A549 (cell line): ENCODE measurements at regions of chr7 and their contacts with region 1.

Region 1: DNA sequence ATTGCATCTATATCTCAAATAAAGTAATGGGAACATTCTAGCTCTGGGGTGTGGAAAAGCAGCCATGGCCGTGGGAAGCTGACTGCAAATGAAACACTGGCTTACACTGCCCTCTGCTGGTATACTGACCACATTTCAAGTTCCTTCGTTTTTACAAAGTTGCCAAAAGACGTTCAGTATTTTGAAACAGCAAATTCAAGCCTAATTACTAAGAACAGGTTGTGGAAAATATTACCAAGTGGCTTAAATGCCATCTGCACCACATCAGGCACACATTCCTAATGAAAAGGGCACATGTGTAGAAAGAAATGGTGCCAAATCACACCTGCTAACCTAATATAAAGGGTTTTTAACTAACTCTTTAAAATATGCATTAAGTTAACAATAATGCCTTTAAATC is 83.9 kb downstream of the JAZF1 start:
- DNase-seq: peak; percentile 63 to 72
- ATAC-seq: peak; percentile 65 to 68; a peak in 3 of 6 replicates
- H3K4me3 ChIP-seq: no peak overlapping the region
- H3K27ac ChIP-seq: no peak overlapping the region
- H3K4me1 ChIP-seq: 0 out of 3 replicates have a peak, but pooled peaks cover 3% of the 10 kb centered on the region
- CTCF ChIP-seq: peak; percentile 92
- EP300 ChIP-seq: no peak
- POLR2A ChIP-seq: no peak
- RAD21 ChIP-seq: peak; percentile 88 to 94

Region 2: DNA sequence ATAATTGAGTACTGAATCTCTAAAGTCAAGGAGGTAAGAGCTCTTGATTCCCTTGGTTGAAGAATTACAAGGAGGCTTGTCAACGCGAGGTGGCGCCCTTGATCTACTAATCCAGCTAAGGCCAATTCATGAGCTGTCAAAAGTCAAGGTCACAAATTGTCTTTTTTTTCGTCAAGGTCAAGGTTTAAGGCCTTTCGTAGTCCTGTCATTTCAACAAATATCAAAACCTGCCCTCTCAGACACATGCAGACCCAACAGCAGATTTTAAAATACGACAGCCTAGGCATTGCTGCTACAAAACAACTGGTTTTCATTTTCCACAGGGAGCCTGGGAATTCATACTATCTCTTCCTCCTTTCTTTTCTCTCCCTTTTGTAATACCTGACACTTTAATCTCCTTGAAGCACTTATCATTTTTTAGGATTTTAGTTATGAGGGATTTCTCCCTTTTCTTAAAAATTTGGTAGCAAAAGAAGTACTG is 900.4 kb before region 1 on chr7:
- CTCF ChIA-PET with region 1: interaction called, 58 read pairs
- POLR2A ChIA-PET with region 1: interaction called, 3 read pairs
- DNase-seq: peak; percentile 58 to 79
- ATAC-seq: no peak
- H3K4me3 ChIP-seq: no peak overlapping the region
- H3K27ac ChIP-seq: no peak overlapping the region
- H3K4me1 ChIP-seq: peaks cover 15% of the 10 kb centered on the region
- CTCF ChIP-seq: peak; percentile 96
- EP300 ChIP-seq: no peak
- POLR2A ChIP-seq: no peak
- RAD21 ChIP-seq: peak; percentile 97 to 98

Region 3: GRCh38 chr7:27535795-27536194 is 560.9 kb before region 1 on chr7:
- CTCF ChIA-PET with region 1: no interaction called
- POLR2A ChIA-PET with region 1: no interaction called
- DNase-seq: no peak
- ATAC-seq: no peak
- H3K4me3 ChIP-seq: no peak overlapping the region
- H3K27ac ChIP-seq: no peak overlapping the region
- H3K4me1 ChIP-seq: no peaks in the 10 kb centered on the region
- CTCF ChIP-seq: no peak
- EP300 ChIP-seq: no peak
- POLR2A ChIP-seq: no peak
- RAD21 ChIP-seq: no peak

Region 4: DNA sequence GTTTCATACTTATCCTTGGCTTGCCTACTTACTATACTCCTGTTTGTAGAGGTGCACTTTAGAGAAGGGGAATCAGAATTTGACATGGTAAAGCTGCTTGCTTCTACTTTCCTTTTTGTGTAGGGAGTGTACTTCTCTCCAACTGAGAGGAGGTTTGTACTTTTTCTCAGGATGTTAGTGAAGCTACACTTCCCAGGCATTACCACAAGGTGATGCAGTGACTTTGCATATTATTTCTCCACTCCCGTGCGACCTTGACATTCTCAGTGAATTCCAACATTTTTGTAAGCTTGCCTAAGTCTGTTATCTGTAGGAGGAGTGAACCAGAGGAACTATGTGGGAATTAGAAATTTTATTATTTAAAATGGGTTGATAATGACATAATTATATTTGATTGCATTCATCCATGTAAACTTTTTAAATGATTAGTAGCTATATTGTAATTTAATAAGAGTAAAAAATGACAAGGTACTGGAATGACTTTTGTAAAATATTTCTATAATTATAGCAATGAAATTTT is 351.6 kb before region 1 on chr7:
- CTCF ChIA-PET with region 1: interaction called, 10 read pairs
- POLR2A ChIA-PET with region 1: no interaction called
- DNase-seq: peak; percentile 67 to 90
- ATAC-seq: peak; percentile 81 to 86
- H3K4me3 ChIP-seq: no peak overlapping the region; the same call in 2 of the 3 replicates
- H3K27ac ChIP-seq: peak overlapping the region; percentile 61 to 72
- H3K4me1 ChIP-seq: peaks cover 58% of the 10 kb centered on the region
- CTCF ChIP-seq: peak; percentile 88
- EP300 ChIP-seq: no peak
- POLR2A ChIP-seq: no peak
- RAD21 ChIP-seq: peak; percentile 85 to 89

Region 5: DNA sequence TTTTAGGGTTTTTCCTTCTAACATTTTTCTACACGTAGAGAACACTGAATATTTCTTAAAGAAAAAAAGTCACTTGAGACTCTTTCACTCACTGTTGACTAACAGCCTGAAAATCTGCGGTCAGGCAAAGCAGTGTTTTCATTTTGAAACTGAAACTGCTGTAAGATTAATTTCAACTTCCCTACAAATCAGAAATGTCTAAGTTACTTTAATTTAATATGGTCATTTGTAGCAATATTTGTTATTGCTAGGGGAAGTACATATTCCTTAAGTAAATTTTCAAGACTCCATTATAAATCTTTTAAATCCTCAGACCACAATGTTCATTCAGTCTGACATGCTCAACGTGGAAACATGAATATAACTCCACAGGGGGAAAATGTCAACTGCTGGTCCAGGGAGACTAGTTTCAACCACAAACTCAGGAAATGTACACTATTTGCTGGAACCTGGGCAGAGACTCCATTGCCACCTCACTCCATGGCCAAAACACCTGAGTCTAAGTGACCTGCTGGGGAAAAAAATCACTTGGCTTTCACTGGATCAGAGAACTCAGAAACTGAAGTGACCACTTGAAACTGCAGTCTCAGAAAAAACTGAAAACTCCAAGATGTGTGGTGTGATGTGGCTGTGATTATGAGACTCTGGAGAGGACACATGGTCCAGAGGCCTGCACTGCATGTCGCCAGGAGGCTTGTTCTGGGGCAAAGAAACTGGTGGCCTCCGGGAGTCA is 195.5 kb before region 1 on chr7:
- CTCF ChIA-PET with region 1: no interaction called
- POLR2A ChIA-PET with region 1: no interaction called
- DNase-seq: no peak
- ATAC-seq: peak in 1 of 2 experiments; percentile 49; a peak in 2 of 6 replicates
- H3K4me3 ChIP-seq: no peak overlapping the region
- H3K27ac ChIP-seq: 0 out of 6 replicates have a peak overlapping the region, but pooled peaks of 1 of the 2 experiments have one; percentile 17
- H3K4me1 ChIP-seq: no peaks in the 10 kb centered on the region
- CTCF ChIP-seq: no peak
- EP300 ChIP-seq: no peak
- POLR2A ChIP-seq: no peak
- RAD21 ChIP-seq: no peak

Region 6: DNA sequence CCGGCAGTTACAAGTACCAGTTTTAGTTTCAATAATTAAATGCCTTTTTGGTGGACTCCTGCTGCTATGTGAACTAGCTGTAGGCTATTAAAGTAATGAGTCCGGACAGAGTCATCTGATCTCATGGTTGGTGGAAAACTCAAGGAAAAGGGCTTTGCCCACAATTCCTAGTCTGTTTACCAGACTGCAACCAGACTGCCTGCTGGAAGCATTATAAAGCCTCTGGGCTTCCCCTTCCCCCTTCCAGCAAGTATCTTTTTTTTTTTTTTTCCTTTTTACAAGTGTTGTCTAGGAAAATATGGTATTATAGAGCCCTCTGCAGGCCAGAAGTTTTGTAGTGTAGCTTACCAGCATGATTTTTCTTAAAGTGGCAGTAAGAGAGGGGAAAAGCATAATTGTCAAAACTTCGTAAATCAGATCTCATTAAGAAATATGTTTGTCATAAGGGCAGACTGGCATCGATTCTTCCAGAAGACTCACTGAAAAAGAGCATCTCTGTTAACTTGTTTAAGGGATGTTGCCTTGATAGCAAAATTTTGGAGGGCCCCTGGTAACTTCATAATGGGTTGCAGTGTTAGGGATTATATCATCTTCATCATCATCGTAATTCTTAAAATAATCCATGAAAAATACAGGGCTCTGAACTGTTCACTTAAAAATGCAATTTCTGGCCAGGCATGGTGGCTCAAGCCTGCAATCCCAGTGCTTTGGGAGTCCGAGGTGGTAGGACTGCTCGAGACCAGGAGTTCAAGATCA is 175.5 kb before region 1 on chr7:
- CTCF ChIA-PET with region 1: interaction called, 14 read pairs
- POLR2A ChIA-PET with region 1: no interaction called
- DNase-seq: peak; percentile 49 to 82
- ATAC-seq: peak; percentile 79 to 90
- H3K4me3 ChIP-seq: 0 out of 3 replicates have a peak overlapping the region, but pooled peaks have one; percentile 1
- H3K27ac ChIP-seq: peak overlapping the region; percentile 43 to 71; a peak in 5 of 6 replicates
- H3K4me1 ChIP-seq: peaks cover 37% of the 10 kb centered on the region
- CTCF ChIP-seq: peak; percentile 84
- EP300 ChIP-seq: no peak
- POLR2A ChIP-seq: no peak
- RAD21 ChIP-seq: peak; percentile 88 to 94

Region 7: DNA sequence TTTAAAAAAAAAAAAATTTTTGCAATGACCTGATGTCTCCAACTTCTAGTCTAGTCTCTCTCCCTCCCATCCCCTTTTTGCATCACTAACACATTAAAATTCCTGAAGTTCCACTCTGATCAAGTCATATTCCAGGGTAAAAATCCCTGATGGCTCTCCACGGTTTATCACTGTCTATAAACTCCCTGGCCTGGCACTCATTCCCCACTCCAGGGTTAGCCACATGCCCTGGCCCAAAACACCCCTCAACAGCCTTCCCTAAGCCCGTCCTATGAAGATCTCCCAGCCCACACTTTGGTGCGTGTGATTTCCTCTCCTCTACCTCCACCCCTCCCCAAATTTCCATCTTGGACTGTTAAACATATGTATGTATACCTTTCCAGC is 41.6 kb before region 1 on chr7:
- CTCF ChIA-PET with region 1: interaction called, 18 read pairs
- POLR2A ChIA-PET with region 1: no interaction called
- DNase-seq: peak in 1 of 2 experiments; percentile 77
- ATAC-seq: peak; percentile 82 to 91
- H3K4me3 ChIP-seq: no peak overlapping the region; the same call in 2 of the 3 replicates
- H3K27ac ChIP-seq: peak overlapping the region; percentile 87 to 92
- H3K4me1 ChIP-seq: peaks cover 58% of the 10 kb centered on the region
- CTCF ChIP-seq: no peak
- EP300 ChIP-seq: no peak; a peak in 1 of 5 replicates
- POLR2A ChIP-seq: no peak
- RAD21 ChIP-seq: no peak

Region 8: DNA sequence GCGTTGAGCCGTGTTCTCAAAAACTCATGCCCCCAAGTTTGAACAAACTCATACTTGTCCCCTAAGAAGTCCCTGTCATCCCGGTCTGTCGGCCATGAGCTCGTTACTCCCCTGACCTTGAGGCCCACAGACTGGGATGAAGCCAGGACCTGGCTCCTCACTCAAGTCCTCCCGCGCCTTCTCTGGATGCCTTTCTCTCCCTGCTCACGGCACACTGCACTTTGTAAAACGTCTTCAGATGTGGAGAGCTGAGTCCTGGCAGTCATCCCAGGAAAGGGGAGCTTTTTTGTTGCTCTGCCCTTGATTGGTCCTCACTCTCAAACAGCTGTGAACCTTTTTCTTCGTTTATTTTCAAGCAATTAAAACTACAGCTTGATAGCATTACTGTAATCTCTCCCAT is 26.9 kb before region 1 on chr7:
- CTCF ChIA-PET with region 1: interaction called, 19 read pairs
- POLR2A ChIA-PET with region 1: no interaction called
- DNase-seq: no peak
- ATAC-seq: no peak
- H3K4me3 ChIP-seq: no peak overlapping the region
- H3K27ac ChIP-seq: peak overlapping the region; percentile 22 to 65; a peak in 4 of 6 replicates
- H3K4me1 ChIP-seq: peaks cover 40% of the 10 kb centered on the region
- CTCF ChIP-seq: no peak
- EP300 ChIP-seq: no peak
- POLR2A ChIP-seq: no peak
- RAD21 ChIP-seq: no peak